Common myeloid progenitor, CD34-positive (primary cell): ENCODE measurements at regions of chr14 and their contacts with region 1.

Region 1: GRCh38 chr14:58501214-58501816 is 73.8 kb downstream of the KIAA0586 start:
- DNase-seq: peak; percentile 67 to 88 (median 85)
- H3K4me3 ChIP-seq: no peak overlapping the region
- H3K27ac ChIP-seq: no peak overlapping the region
- H3K4me1 ChIP-seq: no peaks in the 10 kb centered on the region
- H3K27me3 ChIP-seq: no peaks in the 10 kb centered on the region

Region 2: GRCh38 chr14:58469309-58469708 is 32.0 kb before region 1 on chr14:
- CTCF ChIA-PET with region 1: no interaction called
- POLR2A ChIA-PET with region 1: no interaction called
- DNase-seq: no peak
- H3K4me3 ChIP-seq: no peak overlapping the region
- H3K27ac ChIP-seq: no peak overlapping the region
- H3K4me1 ChIP-seq: no peaks in the 10 kb centered on the region
- H3K27me3 ChIP-seq: no peaks in the 10 kb centered on the region

Region 3: GRCh38 chr14:58637391-58638230 is 136.3 kb after region 1 on chr14 and contains the start of gene DACT1:
- CTCF ChIA-PET with region 1: interaction called, 18 read pairs
- POLR2A ChIA-PET with region 1: interaction called, 3 read pairs
- DNase-seq: peak; percentile 69 to 88 (median 83)
- H3K4me3 ChIP-seq: peak within 1 kb of the TSS; percentile 67 to 92 (median 78)
- H3K27ac ChIP-seq: peak within 1 kb of the TSS in 1 of 2 experiments; percentile 43
- H3K4me1 ChIP-seq: peaks cover 17 to 42% (median 29%) of the 10 kb centered on the region in 4 experiments
- H3K27me3 ChIP-seq: peaks cover 0 to 11% (median 0%) of the 10 kb centered on the region in 5 experiments

Region 4: DNA sequence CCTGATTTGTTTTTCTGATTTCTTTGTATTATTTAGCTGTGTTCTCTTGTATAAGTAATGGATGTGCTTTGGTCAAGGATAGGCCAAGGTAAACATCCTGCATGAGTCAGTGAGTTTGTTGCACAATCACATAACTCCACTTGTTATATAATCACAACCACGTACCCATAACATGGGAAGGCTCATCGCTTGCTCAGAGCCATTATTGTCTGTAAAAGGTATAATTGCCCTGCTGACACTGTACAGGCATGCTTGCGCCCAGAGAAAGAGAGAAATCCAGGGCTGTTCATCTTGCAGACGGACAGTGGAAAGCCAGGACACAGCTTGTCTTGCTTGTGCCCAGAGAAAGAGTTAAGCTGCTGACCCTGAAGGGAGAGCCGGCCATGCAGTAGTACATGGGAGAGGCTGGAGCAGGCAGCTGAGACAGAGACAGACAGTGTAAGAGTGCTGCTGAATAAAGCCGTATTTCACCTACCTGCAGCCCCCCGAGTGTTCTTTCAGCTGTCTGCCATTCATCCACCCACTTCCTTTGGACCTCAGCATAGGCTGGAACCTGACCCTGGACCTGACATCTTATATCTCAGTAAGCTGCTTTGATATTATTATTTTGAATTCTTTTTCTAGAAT is 512.5 kb after region 1 on chr14:
- CTCF ChIA-PET with region 1: interaction called, 20 read pairs
- POLR2A ChIA-PET with region 1: no interaction called
- DNase-seq: no peak
- H3K4me3 ChIP-seq: no peak overlapping the region
- H3K27ac ChIP-seq: no peak overlapping the region
- H3K4me1 ChIP-seq: peaks cover 0 to 7% (median 0%) of the 10 kb centered on the region in 4 experiments
- H3K27me3 ChIP-seq: no peaks in the 10 kb centered on the region

Region 5: GRCh38 chr14:59020382-59020781 is 519.1 kb after region 1 on chr14:
- CTCF ChIA-PET with region 1: interaction called, 20 read pairs
- POLR2A ChIA-PET with region 1: no interaction called
- DNase-seq: peak; percentile 30 to 45 (median 38)
- H3K4me3 ChIP-seq: no peak overlapping the region
- H3K27ac ChIP-seq: no peak overlapping the region
- H3K4me1 ChIP-seq: no peaks in the 10 kb centered on the region
- H3K27me3 ChIP-seq: no peaks in the 10 kb centered on the region

Region 6: DNA sequence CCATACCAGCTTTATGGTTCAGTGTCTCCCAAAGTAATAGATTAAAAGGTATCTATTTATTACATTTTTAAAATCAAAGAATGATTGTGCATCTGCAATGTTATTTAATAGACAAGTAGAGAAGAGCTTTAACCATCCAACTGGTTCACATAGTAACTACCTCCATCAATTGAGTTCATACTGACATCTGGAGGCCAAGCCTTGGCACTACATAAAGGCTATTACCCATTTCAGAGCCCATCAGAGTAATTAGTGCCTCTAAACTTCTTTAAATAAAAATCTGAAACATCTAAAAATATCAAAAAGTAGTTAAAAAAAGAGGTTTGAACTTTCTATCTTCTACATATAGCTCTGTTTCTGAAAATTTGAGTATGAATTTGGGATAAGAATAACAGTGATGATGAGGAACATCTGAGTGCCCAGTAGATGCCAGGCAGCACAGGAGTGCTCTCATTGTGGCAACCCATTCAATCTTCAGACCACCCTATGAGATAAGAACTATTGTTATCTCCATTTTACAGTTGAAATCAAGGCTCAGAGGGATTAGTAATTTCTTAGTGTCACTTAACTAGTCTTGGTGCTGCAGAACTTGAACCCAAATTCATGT is 554.2 kb after region 1 on chr14:
- CTCF ChIA-PET with region 1: interaction called, 10 read pairs
- POLR2A ChIA-PET with region 1: no interaction called
- DNase-seq: peak; percentile 38 to 74 (median 67)
- H3K4me3 ChIP-seq: no peak overlapping the region
- H3K27ac ChIP-seq: no peak overlapping the region
- H3K4me1 ChIP-seq: no peaks in the 10 kb centered on the region
- H3K27me3 ChIP-seq: no peaks in the 10 kb centered on the region

Region 7: GRCh38 chr14:59126710-59127432 is 625.6 kb after region 1 on chr14:
- CTCF ChIA-PET with region 1: interaction called, 17 read pairs
- POLR2A ChIA-PET with region 1: no interaction called
- DNase-seq: peak; percentile 53 to 72 (median 70)
- H3K4me3 ChIP-seq: no peak overlapping the region
- H3K27ac ChIP-seq: no peak overlapping the region
- H3K4me1 ChIP-seq: peaks cover 0 to 6% (median 0%) of the 10 kb centered on the region in 4 experiments
- H3K27me3 ChIP-seq: no peaks in the 10 kb centered on the region